Cardiac septum (tissue), 1 donor: ENCODE measurements at regions of chr13 and their contacts with region 1.

Region 1: GRCh38 chr13:106690779-106691178 is 122.8 kb upstream of the ARGLU1 start:
- DNase-seq: no peak

Region 2: GRCh38 chr13:106619688-106620555 is 70.9 kb before region 1 on chr13:
- intact Hi-C with region 1: loop called (anchors 5 kb)
- DNase-seq: no peak